Heart right ventricle (tissue), 16 donors: ENCODE measurements at regions of chr3 and their contacts with region 1.

Region 1: DNA sequence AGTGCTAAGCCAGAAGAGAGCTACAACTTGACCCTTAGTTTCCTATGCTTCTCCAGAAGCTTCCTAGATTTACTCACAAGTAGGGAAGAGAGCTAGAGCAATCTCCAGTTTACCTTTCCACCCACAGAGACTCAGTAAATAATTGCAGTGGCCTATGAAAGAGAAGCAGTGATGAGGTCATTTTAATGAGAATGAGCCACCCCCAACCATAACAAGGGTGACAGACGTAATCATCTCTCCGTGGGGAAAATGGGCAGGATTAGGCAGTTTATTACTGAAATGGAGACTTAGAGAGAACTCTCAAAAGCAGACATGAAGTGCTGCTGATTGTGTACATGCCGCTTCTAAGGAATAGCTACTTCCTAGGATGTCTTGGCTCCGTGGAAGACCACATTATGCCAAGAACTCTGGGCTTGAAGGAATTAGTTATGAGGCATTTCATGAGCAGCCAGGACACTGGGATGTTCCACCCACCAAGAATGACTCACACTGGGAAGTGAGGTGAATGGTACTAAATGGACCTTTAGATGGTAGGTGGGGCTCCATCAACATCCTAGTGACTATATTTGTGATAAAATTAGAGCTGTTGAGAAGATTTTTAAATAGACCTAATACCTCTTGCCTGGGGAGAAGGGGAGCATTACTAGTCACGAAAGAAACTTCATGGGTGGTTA is 160.9 kb downstream of the EDEM1 start:
- DNase-seq: no peak
- ATAC-seq: no peak
- H3K4me3 ChIP-seq: no peak overlapping the region
- H3K27ac ChIP-seq: no peak overlapping the region
- H3K4me1 ChIP-seq: no peaks in the 10 kb centered on the region
- H3K27me3 ChIP-seq: no peaks in the 10 kb centered on the region
- CTCF ChIP-seq: no peak

Region 2: DNA sequence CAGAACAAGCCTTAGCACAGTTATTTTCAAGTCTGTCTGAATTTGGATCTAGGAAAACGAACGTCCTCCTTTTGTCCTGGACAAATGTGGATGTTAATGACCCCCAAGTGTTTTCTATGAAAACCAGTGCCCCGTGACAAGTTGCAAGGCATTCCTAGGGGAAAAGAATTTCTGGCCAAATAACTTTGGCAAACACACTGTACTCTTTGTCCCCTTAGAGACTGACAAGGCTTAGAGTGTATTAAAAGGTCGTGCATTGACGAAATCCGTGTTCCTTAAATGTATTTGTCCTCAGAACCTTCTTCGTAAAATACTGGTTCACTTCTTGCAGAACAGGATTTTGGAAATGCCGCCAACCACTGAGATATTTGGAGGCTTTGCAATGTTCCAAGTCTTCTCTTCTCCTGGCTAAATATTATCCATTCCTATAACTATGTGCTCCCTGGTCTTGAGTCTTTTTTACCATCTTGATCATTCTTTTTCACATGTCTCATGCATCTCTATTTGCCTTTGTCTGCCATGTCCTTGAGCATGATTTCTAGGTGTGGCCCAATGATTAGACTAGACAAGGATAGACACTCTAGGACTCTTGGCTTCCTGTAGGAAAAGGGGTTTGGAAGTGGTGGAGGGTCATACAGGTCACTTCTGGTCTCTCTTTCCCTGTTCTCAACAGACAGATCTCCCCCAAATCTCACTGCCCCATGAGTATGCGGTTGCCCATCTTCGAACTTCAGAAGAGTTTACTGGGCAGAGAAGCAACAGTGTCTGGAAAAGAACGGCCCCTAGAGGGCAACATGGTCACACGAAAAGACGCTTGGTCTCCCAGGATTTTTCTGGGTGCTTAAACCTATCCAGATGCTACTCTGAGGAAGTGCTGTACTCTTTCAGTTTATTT is 43.3 kb before region 1 on chr3:
- intact Hi-C with region 1: loop called in 1 of 10 experiments (anchors 1 kb)
- DNase-seq: peak in 1 of 2 donors; percentile 27
- ATAC-seq: peak; percentile 34 to 75 (median 54)
- H3K4me3 ChIP-seq: no peak overlapping the region
- H3K27ac ChIP-seq: no peak overlapping the region
- H3K4me1 ChIP-seq: peaks cover 0 to 32% (median 0%) of the 10 kb centered on the region in 9 donors
- H3K27me3 ChIP-seq: no peaks in the 10 kb centered on the region
- CTCF ChIP-seq: peak; percentile 17 to 69 (median 63)

Region 3: GRCh38 chr3:5376761-5377160 is 28.4 kb after region 1 on chr3:
- intact Hi-C with region 1: no loop called
- DNase-seq: no peak
- ATAC-seq: no peak
- H3K4me3 ChIP-seq: no peak overlapping the region
- H3K27ac ChIP-seq: no peak overlapping the region
- H3K4me1 ChIP-seq: no peaks in the 10 kb centered on the region
- H3K27me3 ChIP-seq: no peaks in the 10 kb centered on the region
- CTCF ChIP-seq: no peak